ENCODE measurements at regions of chr1 and their contacts with region 1.

Region 1: DNA sequence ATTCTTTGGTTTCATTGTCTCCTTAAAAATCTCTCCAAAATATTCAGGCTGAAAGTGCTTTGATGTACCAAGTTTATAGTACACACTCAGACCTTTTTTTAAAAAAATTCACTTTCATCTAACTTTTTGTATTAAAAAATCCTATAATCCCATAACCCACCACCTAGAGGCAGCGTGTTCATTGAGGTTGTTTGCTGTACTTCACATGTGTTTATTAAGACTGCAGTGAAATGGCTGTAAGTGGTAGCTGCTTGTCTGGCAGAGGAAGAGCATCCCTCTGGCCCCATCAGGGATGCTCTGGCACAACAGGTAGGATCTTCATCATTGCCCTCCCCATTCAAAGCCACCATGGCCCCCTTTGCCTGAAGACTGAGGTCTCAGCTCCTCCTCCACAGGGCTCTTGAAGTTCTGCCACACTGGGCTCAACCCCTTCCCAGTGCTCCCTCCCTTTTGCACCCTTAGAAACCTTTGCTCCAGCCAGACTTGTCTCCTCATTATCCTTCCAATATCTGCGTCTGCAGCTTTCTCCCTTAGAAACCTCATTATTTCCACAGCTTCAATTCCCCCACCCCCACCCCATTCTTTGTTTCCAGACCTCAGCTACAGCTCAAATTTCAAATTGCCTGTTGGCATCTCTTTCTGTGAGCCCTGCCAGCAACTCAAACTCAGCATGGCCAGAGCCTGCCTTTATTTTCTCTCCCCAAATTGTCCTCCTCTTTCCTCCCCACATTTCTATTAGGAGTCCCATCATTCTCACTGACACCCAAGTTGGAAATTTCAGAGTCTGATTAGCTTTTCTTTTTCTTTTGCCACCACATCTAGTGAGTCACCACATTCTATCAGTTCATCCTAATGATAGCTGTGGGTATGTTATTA is 369.6 kb upstream of the USP24 start:
- DNase-seq: peak; percentile 20
- H3K4me3 ChIP-seq: no peak overlapping the region
- H3K27ac ChIP-seq: no peak overlapping the region
- H3K4me1 ChIP-seq: peaks cover 50% of the 10 kb centered on the region
- H3K27me3 ChIP-seq: no peaks in the 10 kb centered on the region
- CTCF ChIP-seq: peak in 1 of 2 donors; percentile 16

Region 2: GRCh38 chr1:55542901-55543504 is 41.8 kb before region 1 on chr1:
- CTCF ChIA-PET with region 1: no interaction called
- dilution Hi-C with region 1: no loop called
- in situ Hi-C with region 1: no loop called
- intact Hi-C with region 1: no loop called
- DNase-seq: peak; percentile 67
- H3K4me3 ChIP-seq: no peak overlapping the region
- H3K27ac ChIP-seq: no peak overlapping the region
- H3K4me1 ChIP-seq: peaks cover 4% of the 10 kb centered on the region
- H3K27me3 ChIP-seq: no peaks in the 10 kb centered on the region
- CTCF ChIP-seq: no peak

Region 3: GRCh38 chr1:55632058-55632457 is 47.3 kb after region 1 on chr1:
- CTCF ChIA-PET with region 1: no interaction called
- dilution Hi-C with region 1: no loop called
- in situ Hi-C with region 1: no loop called
- intact Hi-C with region 1: loop called (anchors 5 kb)
- DNase-seq: peak; percentile 72
- H3K4me3 ChIP-seq: no peak overlapping the region
- H3K27ac ChIP-seq: peak overlapping the region; percentile 49
- H3K4me1 ChIP-seq: peaks cover 18% of the 10 kb centered on the region
- H3K27me3 ChIP-seq: no peaks in the 10 kb centered on the region
- CTCF ChIP-seq: no peak